Activated naive CD4-positive, alpha-beta T cell treated with anti-CD3 and anti-CD28 coated beads for 36 hours (primary cell): ENCODE measurements at regions of chrX and their contacts with region 1.

Region 1: DNA sequence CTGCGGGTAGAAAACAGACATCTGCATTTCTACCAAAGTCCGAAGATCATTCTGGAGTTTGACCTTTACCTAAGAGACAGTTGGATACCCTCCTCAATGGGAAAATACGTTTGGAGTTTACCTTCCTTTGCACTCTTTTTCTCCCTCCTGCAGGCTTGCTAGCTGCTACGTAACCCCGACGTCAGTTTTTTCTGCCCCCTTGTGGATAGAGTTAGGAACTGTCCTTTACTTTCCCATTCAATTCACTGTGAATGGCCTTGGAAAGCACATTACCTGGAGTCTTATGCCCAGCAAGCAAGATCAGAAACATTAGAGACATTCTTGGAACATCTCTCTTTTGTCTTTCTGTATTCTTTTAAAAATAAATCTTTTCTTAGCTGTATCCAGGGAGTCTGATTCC is 250.7 kb downstream of the NAP1L3 start:
- DNase-seq: no peak
- H3K4me3 Mint-ChIP-seq: no peak overlapping the region
- H3K27ac Mint-ChIP-seq: no peak overlapping the region
- H3K4me1 Mint-ChIP-seq: no peaks in the 10 kb centered on the region
- H3K27me3 Mint-ChIP-seq: peaks cover 3% of the 10 kb centered on the region

Region 2: DNA sequence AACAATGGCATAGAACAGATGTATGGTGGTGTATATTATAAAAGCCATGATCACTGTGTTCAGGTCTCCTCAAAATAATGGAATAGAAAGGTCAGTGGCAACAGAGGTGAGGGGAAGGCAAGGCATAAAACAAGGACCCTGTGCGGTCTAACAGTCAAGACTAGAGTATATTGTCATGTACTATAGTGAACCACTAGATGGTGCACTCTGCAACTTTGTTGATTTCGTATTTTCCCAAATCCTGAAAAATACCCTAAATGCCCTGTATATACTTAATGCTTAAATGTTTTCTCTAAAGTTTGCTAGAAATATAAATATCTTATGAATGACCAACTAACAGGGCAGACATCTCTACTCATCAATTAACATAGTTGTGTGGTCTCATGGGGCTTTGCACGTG is 1190.5 kb before region 1 on chrX:
- CTCF ChIA-PET with region 1: no interaction called
- intact Hi-C with region 1: loop called (anchors 5 kb)
- DNase-seq: no peak
- H3K4me3 Mint-ChIP-seq: no peak overlapping the region
- H3K27ac Mint-ChIP-seq: no peak overlapping the region
- H3K4me1 Mint-ChIP-seq: no peaks in the 10 kb centered on the region
- H3K27me3 Mint-ChIP-seq: no peaks in the 10 kb centered on the region

Region 3: DNA sequence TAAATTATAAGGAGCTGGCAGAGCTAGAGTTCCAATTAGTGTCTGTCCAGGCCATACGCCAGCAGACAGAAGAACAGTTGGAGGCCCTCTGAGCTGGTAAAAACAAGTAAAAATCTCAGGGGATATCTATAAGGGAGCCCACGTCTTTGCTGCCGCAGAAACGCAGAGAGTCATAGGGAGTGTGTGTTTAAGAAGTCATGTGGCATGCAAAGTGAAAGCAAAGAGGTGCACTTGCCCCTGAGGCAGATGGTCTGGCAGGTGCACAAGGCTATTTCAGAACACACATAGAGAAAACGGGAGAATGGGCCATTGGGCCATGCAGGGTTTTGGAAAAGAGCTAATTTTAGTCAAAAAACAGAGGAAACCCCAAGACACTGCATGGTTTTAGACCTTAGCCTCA is 157.9 kb after region 1 on chrX:
- CTCF ChIA-PET with region 1: no interaction called
- intact Hi-C with region 1: no loop called
- DNase-seq: no peak
- H3K4me3 Mint-ChIP-seq: no peak overlapping the region
- H3K27ac Mint-ChIP-seq: no peak overlapping the region
- H3K4me1 Mint-ChIP-seq: no peaks in the 10 kb centered on the region
- H3K27me3 Mint-ChIP-seq: no peaks in the 10 kb centered on the region